Activated CD4-positive, alpha-beta T cell treated with anti-CD3 and anti-CD28 coated beads for 36 hours (primary cell): ENCODE measurements at regions of chr1 and their contacts with region 1.

Region 1: DNA sequence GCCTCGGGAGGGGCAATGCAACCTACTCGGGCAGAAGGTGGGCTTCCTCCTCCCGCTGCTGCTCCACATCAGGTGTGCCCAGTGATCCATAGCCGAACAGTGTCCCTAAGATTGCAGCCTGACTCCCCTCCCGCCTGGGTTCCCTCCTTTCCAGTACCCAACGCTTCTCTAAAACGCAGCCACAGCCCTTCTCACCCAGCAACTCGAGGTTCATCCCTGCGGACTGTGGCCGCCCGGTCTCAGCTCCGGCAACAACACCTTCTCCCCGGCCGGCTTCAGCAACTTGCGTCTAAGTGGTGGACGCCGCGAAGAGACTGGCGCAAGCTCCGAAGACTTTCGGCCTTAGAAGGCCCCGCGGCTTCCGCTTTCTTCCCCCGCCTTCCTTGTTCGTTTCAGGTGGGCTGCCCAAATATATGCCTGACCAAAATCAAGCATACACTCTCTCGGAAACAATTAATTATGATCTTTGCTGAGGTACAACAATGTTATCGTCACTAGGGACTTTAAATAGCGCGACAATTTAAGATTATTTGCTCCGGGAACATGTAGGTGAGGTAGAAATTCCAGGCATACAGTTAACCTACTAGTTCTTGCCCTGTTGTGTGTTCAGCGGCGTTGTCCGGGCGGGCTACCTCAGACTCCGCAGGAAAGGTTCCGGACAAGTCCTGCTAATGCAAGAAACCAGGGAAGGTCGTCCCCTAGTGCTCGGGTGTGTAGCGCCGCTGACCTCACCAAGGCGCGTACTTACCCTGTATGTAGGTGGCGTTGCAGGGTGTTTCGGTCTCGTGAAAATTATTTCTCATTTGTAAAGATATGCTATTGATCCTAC is at the start of gene RBBP5:
- DNase-seq: peak; percentile 96
- ATAC-seq: peak; percentile 98
- H3K4me3 Mint-ChIP-seq: peak within 1 kb of the TSS; percentile 98
- H3K27ac Mint-ChIP-seq: peak within 1 kb of the TSS; percentile 100
- H3K4me1 Mint-ChIP-seq: peaks cover 38% of the 10 kb centered on the region
- H3K27me3 Mint-ChIP-seq: no peaks in the 10 kb centered on the region
- total RNA-seq, gene RBBP5: 23.1 to 24.3 TPM

Region 2: DNA sequence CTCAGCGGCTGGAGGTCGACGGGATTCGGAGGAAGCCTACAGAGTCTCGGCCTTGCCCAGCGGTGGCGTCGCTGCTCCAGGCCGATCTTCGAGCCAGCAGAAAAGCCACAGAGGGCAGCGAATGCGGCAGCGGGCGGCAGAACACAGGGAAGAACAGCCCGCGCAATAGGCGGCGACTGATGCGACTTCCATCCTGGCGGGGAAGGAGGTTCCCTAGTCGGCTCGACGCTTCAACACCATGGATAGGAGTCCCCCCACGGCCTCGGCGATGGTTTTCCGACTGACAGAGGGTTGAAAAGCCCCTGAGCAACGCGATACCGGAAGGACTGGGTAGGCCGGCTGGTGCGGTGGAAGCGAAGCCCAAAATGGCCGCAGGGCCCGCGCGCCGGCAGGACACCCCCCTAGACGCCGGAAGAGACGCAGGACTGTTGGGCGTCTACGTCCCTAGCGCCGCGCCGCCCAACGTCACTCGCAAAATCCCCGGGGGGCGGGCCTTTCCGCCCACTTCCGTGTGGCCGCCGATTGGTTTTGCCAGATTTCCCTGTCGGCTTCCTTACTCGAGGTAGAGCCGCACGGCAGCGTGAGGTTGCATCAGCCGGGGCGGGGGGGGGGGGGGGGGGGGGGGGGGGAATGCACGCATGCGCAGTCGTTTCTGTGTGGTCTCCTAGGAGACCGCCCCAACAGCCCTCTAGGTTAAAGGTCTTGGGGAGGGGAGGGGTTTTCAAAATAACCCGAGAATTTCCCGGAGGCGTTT is 710.2 kb before region 1 on chr1 and contains the start of gene PPP1R15B:
- CTCF ChIA-PET with region 1: no interaction called
- POLR2A ChIA-PET with region 1: no interaction called
- intact Hi-C with region 1: loop called (anchors 1 to 5 kb)
- DNase-seq: peak; percentile 98
- ATAC-seq: peak; percentile 92
- H3K4me3 Mint-ChIP-seq: peak within 1 kb of the TSS; percentile 98
- H3K27ac Mint-ChIP-seq: peak within 1 kb of the TSS; percentile 100
- H3K4me1 Mint-ChIP-seq: peaks cover 10% of the 10 kb centered on the region
- H3K27me3 Mint-ChIP-seq: no peaks in the 10 kb centered on the region
- total RNA-seq, gene PPP1R15B: 55.9 to 57.6 TPM

Region 3: DNA sequence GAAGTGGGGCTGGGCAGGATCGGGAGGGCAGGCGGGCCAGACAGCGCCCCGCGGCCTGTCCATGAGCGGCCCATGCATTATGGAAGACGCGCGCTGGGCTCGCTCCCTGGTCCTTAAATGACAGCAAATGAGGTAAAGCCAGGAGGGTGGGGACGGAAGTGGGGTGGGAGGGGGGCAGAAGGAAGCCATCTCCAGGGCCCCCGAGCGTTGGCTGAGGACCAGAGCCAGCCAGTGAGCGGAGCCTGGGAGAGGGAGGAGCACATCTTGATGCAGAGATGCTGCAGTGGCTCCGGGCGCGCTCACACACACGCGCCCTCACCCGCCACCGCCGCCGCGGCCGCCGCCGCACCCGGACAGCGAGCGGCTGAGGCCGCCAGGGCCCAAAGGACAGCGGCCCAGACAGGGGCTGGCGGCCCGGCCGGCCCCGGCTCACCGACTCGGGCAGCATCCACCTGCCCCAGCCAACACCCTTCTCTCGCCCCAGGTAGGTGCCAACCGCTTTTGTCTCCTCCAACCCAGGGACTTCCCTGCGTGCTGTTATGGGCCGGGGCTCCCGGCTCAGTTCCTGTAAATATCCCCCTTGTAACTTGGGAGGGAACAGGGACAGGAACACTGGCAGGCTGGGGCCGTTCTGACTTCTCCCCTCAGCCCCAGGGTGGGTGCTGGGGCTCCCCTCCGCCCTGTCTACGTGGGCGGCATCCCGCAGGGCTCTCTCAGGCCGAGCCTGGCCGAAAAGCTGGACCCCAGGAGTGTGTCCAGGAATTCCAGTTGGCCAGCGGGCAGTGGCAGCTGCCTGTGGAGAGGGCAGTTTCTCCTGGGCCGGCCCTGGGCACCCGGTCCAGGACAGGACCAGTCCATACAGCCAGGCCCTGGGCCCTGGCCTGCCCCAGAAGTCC is 78.7 kb before region 1 on chr1 and contains the start of gene CNTN2:
- CTCF ChIA-PET with region 1: no interaction called
- POLR2A ChIA-PET with region 1: no interaction called
- intact Hi-C with region 1: no loop called
- DNase-seq: no peak
- ATAC-seq: no peak
- H3K4me3 Mint-ChIP-seq: no peak within 1 kb of the TSS
- H3K27ac Mint-ChIP-seq: no peak within 1 kb of the TSS
- H3K4me1 Mint-ChIP-seq: no peaks in the 10 kb centered on the region
- H3K27me3 Mint-ChIP-seq: peaks cover 40% of the 10 kb centered on the region
- total RNA-seq, gene CNTN2: not detected

Region 4: DNA sequence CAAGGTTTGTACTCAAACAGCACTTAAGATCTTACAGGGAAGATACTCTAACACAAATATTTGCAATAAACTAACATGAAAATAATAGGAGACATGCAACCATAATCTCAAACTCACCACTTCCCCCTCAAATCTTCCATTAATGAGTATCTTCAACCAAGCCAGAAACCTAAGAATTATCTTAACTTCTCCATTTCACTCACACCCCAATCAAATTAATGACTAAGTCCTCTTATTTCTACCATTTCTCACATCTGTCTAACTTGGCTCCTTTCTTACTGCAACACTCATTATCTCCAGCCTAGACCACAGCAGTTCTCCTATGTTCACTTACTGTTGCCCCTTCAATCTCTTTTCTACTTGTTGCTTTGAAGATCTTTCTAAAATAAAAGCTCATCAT is 10.5 kb before region 1 on chr1:
- CTCF ChIA-PET with region 1: interaction called, 10 read pairs
- POLR2A ChIA-PET with region 1: interaction called, 5 read pairs
- intact Hi-C with region 1: no loop called
- DNase-seq: no peak
- ATAC-seq: peak; percentile 30
- H3K4me3 Mint-ChIP-seq: no peak overlapping the region
- H3K27ac Mint-ChIP-seq: peak overlapping the region; percentile 4
- H3K4me1 Mint-ChIP-seq: peaks cover 8% of the 10 kb centered on the region
- H3K27me3 Mint-ChIP-seq: no peaks in the 10 kb centered on the region

Region 5: DNA sequence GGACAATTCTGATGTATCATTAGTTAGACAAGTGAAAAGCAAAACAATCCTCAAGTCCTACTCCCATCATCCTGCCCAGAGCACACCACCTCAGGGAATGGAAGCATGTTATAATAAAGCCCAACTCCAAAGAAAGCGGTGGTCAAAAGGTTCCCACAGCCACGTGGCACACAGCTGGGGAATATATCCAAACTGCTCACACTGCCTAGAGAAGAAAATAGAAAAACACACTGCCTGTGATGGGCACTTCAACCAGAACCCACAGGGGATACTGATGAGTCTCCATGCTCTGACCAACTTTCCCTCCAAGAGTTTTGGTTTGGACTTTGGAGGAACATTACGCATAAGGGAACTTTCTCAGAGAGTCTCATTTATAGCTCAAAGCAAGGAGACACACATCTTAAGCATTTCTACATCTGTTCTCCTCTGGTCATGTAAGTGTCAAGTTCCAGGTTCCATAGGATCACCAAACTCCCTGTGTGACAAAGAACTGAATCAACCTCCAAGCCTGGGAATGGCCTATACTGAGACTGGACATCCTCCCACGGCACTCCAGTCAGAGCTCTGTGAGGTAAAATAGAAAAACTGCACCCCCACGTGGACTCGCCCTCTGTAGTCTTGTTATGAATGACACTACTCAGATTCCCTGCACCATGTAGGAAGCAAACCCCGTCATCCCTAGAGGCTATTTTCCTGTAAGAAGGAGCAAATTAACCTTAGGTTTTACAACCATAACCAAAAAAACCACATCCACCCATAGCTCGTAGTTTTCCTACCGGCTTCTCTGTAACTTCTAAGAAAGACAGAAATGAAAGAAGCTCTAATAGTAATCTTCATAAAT is 77.4 kb after region 1 on chr1:
- CTCF ChIA-PET with region 1: interaction called, 9 read pairs
- POLR2A ChIA-PET with region 1: no interaction called
- intact Hi-C with region 1: loop called (anchors 2 to 5 kb)
- DNase-seq: peak; percentile 67
- ATAC-seq: peak; percentile 63
- H3K4me3 Mint-ChIP-seq: peak overlapping the region; percentile 50
- H3K27ac Mint-ChIP-seq: peak overlapping the region; percentile 94
- H3K4me1 Mint-ChIP-seq: peaks cover 68% of the 10 kb centered on the region
- H3K27me3 Mint-ChIP-seq: no peaks in the 10 kb centered on the region

Region 6: GRCh38 chr1:205227584-205228006 is 105.7 kb after region 1 on chr1 and contains the start of gene TMCC2:
- CTCF ChIA-PET with region 1: interaction called, 5 read pairs
- POLR2A ChIA-PET with region 1: interaction called, 3 read pairs
- intact Hi-C with region 1: loop called in 1 of 2 experiments (anchors 1 kb)
- DNase-seq: peak; percentile 92
- ATAC-seq: peak; percentile 81
- H3K4me3 Mint-ChIP-seq: peak within 1 kb of the TSS; percentile 89
- H3K27ac Mint-ChIP-seq: peak within 1 kb of the TSS; percentile 95
- H3K4me1 Mint-ChIP-seq: peaks cover 38% of the 10 kb centered on the region
- H3K27me3 Mint-ChIP-seq: peaks cover 14% of the 10 kb centered on the region
- total RNA-seq, gene TMCC2: 10.5 to 11.0 TPM

Region 7: GRCh38 chr1:205313563-205314308 is 191.9 kb after region 1 on chr1:
- CTCF ChIA-PET with region 1: no interaction called
- POLR2A ChIA-PET with region 1: no interaction called
- intact Hi-C with region 1: loop called in 1 of 2 experiments (anchors 5 kb)
- DNase-seq: peak; percentile 59
- ATAC-seq: peak; percentile 80
- H3K4me3 Mint-ChIP-seq: peak overlapping the region; percentile 76
- H3K27ac Mint-ChIP-seq: peak overlapping the region; percentile 93
- H3K4me1 Mint-ChIP-seq: peaks cover 78% of the 10 kb centered on the region
- H3K27me3 Mint-ChIP-seq: no peaks in the 10 kb centered on the region

Region 8: DNA sequence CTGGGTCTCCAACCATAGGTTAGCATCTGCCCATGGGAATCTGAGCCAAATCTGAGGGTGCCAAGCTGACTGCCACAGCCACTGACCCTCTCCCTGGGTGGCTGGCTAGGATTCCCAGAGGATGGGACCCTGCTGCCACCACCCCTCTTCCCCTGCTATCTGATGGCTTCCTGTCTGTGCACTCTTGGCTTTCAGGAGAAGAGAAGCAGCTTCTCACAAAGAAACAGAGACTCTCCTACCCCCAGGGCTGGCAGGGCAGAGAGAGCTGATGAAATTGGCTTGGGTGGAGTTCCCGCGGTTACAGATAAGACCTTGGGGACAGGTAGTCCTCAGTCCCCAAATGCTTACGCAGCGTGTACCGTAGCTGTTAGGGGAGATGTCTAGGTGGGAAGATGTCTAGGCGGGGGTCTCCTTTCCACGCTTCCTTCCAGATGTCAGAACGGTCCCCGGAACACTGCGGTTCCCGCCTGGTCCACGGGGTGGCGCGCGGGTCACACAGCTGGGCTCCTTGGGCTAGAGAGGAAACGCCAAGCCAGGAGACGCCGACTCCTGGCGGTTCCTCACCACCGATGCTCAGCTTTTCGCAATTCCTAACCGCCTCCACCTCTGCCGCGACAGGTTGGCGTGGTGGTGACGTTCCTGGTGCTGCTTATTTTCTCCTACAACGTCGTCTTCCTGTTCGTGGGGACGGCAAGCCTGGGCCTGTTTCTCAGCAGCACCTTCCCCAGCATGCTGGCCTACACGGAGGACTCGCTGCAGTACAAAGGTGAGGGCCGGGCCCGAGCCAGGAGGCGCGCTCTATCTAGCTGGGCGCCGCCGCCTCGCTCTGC is 469.9 kb after region 1 on chr1:
- CTCF ChIA-PET with region 1: no interaction called
- POLR2A ChIA-PET with region 1: no interaction called
- intact Hi-C with region 1: loop called in 1 of 2 experiments (anchors 2 kb)
- DNase-seq: peak; percentile 94
- ATAC-seq: peak; percentile 82
- H3K4me3 Mint-ChIP-seq: peak overlapping the region; percentile 78
- H3K27ac Mint-ChIP-seq: peak overlapping the region; percentile 78
- H3K4me1 Mint-ChIP-seq: peaks cover 35% of the 10 kb centered on the region
- H3K27me3 Mint-ChIP-seq: no peaks in the 10 kb centered on the region